ENCODE measurements at regions of chr17 and their contacts with region 1.

Region 1: DNA sequence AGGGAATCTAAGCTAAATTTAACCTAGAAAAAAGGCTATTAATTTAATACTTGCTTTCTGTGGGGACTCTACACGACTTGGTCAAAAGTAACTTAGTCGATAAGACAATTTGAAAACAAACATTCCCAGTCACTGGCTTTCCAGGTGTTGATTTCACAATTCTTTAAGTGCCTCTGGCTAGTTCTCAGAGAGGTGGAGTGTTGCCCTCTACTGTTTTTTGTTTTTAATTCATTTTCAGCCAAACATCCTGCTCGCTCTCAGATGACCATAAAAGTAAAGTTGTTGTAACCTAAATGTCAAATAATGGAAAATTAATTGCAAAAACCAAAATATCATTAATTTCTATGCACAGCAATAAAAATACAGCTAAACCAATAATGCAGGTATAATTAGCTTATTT is 107.1 kb downstream of the MYO1D start:
- H3K4me3 ChIP-seq: no peak overlapping the region
- H3K27ac ChIP-seq: no peak overlapping the region
- H3K4me1 ChIP-seq: 0 out of 2 replicates have a peak, but pooled peaks cover 3% of the 10 kb centered on the region
- CTCF ChIP-seq: no peak

Region 2: DNA sequence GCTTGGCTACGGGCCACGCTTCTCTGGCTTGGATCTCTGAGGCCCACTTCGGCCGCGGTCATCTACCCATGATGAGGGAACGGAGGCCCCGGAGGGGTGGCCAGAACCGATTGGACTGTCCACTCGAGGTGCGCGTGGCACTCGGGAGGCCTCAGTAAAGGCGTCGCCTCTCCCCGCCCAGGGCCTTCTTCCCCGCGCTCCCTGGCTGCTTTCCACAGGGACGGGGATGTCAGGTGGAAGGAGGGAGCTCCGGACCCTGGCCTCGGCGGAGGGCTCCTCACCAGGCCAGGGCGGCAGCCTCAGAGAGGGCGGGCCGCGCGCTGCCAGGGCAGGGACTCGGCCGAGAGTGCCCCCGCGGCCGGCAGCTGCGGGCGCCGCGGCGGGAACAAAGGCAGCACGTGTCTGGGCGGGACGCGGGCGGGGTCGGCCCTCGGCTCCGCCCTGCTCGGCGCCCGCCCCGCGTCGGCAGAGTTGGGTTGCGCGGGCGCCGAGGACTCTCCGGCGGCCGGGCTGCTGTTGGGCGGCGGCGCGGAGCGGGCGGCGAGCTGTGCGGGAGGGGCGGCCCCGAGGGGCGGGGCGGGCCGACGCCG is 283.6 kb before region 1 on chr17:
- CTCF ChIA-PET with region 1: interaction called, 10 read pairs
- POLR2A ChIA-PET with region 1: no interaction called
- H3K4me3 ChIP-seq: peak overlapping the region; percentile 57
- H3K27ac ChIP-seq: peak overlapping the region; percentile 80; the same call in 1 of the 2 replicates
- H3K4me1 ChIP-seq: peaks cover 31% of the 10 kb centered on the region
- CTCF ChIP-seq: no peak